ENCODE measurements at regions of chr2 and their contacts with region 1.

Region 1: DNA sequence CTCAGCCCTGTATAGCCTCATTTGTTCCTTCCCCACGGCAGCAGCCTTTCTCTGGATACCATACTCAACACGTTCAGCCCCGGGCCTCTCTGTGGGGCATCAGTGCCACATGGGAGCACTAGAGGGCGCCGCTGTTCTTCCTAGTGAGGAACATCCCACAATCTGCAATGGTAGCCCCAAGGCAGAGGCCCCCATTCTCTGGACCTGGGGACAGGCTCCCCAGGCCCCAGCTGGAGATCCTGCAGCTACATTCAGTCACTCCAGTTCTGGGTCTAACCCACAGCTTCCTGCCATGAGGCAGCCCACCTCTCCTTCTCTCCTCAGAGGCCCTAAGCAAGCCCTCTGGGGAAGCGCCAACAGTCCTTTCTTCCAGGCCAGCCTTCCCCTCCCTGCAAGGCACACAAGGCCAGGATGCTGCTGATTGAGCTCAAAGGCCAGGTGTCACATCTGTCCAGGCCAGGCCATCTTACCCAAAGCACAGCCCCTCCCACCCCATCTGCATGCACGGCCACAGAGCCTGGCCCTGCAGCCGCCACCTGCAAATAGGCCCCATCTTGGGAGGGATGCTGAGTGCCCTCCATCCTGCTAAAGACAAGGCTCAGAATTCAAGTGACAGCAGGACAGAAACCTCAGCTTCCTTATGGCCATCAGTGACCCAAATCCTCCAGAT is 14.3 kb upstream of the SFXN5 start:
- DNase-seq: peak; percentile 63 to 73
- H3K4me3 ChIP-seq: no peak overlapping the region
- H3K27ac ChIP-seq: no peak overlapping the region
- H3K4me1 ChIP-seq: peaks cover 7% of the 10 kb centered on the region
- H3K27me3 ChIP-seq: no peaks in the 10 kb centered on the region
- CTCF ChIP-seq: peak; percentile 96

Region 2: DNA sequence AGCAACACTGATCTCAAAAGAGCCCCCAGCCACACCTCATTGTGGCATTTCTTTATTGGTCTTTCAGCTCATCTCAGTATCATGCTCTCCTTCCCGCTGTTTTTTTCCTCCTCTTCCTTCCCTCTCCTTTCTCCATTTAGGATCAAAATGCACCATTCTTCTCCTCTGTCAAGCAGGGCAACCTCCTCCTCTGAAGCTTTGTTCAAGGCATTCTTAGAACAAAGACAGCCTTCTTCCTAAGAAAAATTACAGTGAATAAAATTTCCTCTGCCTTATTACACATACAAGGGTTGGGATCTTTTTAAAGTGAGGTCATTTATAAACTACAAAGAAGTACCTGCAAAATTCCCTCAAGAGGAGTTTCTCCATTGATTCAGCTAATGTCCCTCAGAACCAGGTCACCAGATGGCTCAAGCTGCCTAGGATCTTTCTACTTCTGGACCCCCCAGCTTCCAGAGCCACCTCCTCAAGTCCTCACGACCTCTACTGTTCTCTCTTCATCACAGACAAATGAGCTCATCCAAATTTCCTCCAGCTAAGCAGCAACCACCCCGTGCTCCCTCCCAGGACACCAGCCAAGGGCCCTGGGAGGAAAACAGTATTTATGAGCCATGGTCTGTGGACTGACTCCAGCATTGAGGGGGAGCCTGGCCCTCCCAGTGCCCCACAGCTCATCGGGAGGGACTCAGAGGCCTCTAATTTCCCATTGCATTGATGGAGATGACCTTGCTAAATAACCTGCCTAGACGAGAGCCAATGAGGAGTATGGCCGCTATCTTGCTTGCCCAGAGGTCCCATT is 32.3 kb before region 1 on chr2:
- CTCF ChIA-PET with region 1: no interaction called
- POLR2A ChIA-PET with region 1: no interaction called
- intact Hi-C with region 1: no loop called
- DNase-seq: no peak
- H3K4me3 ChIP-seq: no peak overlapping the region
- H3K27ac ChIP-seq: no peak overlapping the region
- H3K4me1 ChIP-seq: no peaks in the 10 kb centered on the region
- H3K27me3 ChIP-seq: no peaks in the 10 kb centered on the region
- CTCF ChIP-seq: no peak

Region 3: DNA sequence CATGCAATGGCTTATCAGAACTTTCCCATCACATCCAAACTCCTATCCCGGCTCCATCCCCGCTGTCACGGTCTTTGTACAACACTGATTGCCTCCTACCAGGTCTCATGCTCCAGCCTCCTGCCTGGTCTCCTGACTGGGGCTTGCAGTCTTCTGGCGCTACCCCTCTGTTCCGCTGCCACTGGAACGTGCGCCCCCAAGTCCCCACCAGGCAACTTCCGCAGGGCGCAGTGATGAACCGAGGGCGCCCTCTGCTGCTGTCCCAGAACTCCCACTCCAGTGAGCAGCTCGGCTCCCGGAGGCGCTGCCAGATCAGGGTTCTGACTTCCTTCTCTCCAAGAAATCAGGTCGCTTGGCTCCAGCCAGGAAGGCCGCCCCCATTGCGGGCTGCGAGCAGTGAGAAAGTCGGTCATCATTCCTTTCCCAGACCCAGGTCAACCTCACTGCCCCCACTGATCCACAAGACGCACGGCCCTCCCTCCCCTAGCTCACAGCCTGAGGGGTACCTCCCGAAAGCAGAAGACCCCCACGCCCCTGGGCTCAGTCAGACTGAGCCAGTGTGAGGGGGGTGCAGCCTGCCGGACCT is 70.8 kb after region 1 on chr2:
- CTCF ChIA-PET with region 1: interaction called, 4 read pairs
- POLR2A ChIA-PET with region 1: interaction called, 3 read pairs
- intact Hi-C with region 1: loop called (anchors 1 kb)
- DNase-seq: peak in 1 of 2 experiments; percentile 34
- H3K4me3 ChIP-seq: no peak overlapping the region
- H3K27ac ChIP-seq: no peak overlapping the region
- H3K4me1 ChIP-seq: no peaks in the 10 kb centered on the region
- H3K27me3 ChIP-seq: peaks cover 23% of the 10 kb centered on the region
- CTCF ChIP-seq: peak; percentile 56

Region 4: DNA sequence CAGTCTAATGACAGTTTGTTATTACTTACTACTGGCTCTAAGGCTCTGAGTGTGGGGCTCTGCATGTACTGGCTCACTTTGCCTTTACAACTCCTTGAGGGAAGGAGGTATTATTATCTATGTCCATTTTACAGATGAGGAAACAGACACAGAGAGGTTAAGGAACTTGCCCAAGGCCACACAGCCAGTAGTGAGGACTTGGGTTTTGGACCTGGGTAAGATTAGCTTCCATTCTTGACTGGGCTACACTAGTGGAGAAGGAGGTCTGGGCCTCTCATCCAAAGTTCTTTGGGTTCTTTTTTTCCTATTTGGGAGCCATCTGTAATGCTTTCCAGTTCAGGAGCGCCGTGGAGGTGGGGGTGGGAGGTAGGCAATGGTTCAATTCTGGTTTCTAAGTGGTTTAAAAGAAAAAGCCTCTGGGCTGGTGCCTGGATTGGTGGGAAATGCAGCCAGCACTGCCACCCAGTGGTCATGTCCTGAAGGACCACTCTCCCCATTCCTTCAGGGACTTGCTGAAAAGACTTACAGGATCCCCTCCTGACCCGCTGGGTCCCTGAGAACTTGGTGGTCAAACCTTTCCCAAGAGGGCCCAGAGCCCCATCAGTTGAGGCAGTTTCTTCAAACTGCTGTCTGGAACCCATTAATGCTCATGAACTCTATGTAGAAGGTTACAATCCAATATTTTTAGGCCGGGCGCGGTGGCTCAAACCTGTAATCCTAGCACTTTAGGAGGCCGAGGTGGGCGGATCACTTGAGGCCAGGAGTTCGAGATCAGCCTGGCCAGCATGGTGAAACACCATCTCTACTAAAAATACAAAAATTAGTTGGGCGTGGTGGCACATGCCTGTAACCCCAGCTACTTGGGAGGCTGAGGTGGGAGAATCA is 77.9 kb after region 1 on chr2:
- CTCF ChIA-PET with region 1: interaction called, 3 read pairs
- POLR2A ChIA-PET with region 1: no interaction called
- intact Hi-C with region 1: loop called (anchors 1 kb)
- DNase-seq: peak; percentile 48 to 68
- H3K4me3 ChIP-seq: no peak overlapping the region
- H3K27ac ChIP-seq: no peak overlapping the region
- H3K4me1 ChIP-seq: no peaks in the 10 kb centered on the region
- H3K27me3 ChIP-seq: peaks cover 13% of the 10 kb centered on the region; the same call in 1 of the 2 replicates
- CTCF ChIP-seq: peak; percentile 93

Region 5: DNA sequence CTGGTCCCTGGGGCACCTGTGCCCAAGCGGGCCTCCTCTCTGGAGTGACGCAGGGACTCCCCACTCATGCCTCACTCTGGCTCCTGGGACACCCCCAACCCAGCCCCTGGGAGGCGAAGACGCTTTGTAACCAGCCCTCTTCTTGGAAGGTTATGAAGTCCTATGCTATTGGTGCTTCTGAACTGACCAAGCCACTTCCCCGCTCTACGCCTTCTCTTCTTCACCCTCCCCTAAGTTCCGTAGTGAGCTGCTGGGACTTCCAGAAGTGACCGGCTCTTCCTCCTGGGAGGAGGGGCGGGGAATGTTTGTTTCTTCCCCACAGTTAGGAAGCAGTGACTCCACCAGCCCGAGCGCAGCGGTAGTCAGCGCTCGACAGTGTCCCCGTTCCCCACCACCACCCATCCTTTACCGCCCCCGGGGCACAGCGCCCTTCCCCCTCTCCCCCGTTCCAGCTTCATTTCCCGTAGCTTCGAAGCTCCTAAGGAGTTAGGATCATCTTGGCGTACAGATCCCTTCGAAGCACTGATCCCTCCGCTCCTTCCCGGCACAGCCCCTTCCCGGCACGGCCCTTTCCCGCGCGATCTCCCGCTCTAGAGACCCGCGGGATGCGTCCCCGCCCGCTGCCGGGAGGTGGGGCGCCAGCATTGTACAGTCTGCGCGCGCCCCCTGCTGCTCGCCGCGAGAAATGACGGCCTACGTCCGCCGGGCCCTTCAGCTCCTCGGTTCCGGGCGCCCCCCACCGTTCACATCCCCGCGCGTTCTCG is 91.2 kb after region 1 on chr2:
- CTCF ChIA-PET with region 1: no interaction called
- POLR2A ChIA-PET with region 1: interaction called, 3 read pairs
- intact Hi-C with region 1: loop called (anchors 5 kb)
- DNase-seq: peak; percentile 63 to 83
- H3K4me3 ChIP-seq: peak overlapping the region; percentile 61
- H3K27ac ChIP-seq: no peak overlapping the region
- H3K4me1 ChIP-seq: peaks cover 19% of the 10 kb centered on the region
- H3K27me3 ChIP-seq: peaks cover 55% of the 10 kb centered on the region
- CTCF ChIP-seq: peak; percentile 99

Measured in PC-9 (cell line).